Ovary (tissue), 10 donors: ENCODE measurements at regions of chr1 and their contacts with region 1.

Region 1: GRCh38 chr1:182084487-182085316 is 23.2 kb upstream of the ZNF648 start:
- DNase-seq: peak; percentile 83 to 93 (median 91)
- H3K4me3 ChIP-seq: no peak overlapping the region
- H3K27ac ChIP-seq: peak overlapping the region in 1 of 2 donors; percentile 64
- H3K4me1 ChIP-seq: peaks cover 2% of the 10 kb centered on the region
- H3K27me3 ChIP-seq: no peaks in the 10 kb centered on the region
- CTCF ChIP-seq: peak; percentile 78 to 95 (median 87)
- EP300 ChIP-seq: no peak
- POLR2A ChIP-seq: peak; percentile 4

Region 2: GRCh38 chr1:181482521-181483284 is 602.0 kb before region 1 on chr1:
- intact Hi-C with region 1: loop called in 1 of 4 experiments (anchors 10 kb)
- DNase-seq: no peak
- H3K4me3 ChIP-seq: no peak overlapping the region
- H3K27ac ChIP-seq: no peak overlapping the region
- H3K4me1 ChIP-seq: no peaks in the 10 kb centered on the region
- H3K27me3 ChIP-seq: no peaks in the 10 kb centered on the region
- CTCF ChIP-seq: no peak
- EP300 ChIP-seq: no peak
- POLR2A ChIP-seq: no peak

Region 3: GRCh38 chr1:182357913-182358312 is 273.2 kb after region 1 on chr1:
- intact Hi-C with region 1: no loop called
- DNase-seq: no peak
- H3K4me3 ChIP-seq: no peak overlapping the region
- H3K27ac ChIP-seq: no peak overlapping the region
- H3K4me1 ChIP-seq: no peaks in the 10 kb centered on the region
- H3K27me3 ChIP-seq: no peaks in the 10 kb centered on the region
- CTCF ChIP-seq: no peak
- EP300 ChIP-seq: no peak
- POLR2A ChIP-seq: no peak

Region 4: DNA sequence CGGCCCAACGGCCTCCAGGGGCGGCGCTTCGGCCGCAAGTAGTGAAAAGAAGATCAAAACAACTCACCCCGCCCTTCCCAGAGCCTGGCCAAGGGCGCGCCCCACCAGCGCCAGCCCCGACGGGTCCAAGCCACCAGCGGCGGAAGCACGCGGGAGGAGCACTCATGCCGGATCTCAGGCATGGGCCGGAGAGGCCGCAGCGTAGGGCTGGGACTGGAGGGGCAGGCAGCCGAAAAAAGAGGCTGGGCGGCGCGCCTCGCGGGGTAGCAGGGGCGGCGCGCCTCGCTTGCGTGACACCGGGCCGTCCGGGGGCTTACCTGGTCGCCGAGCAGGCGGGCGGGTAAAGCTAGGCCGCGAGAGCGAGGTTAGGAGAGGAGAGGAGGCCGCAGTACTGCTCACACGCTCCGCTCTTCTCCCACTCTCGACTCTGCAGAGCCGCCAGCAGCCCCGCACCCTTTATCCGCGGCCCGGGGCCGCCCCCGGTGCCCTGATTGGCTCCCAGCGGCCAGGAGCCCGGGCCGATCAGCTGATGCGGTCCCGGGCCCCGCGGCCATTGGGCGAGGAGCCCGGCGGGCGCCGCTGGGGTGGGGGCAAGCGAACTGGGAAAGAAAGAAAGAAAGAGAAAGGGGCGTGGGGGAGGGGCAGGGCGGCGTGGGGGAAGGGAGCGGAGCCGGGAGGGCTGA is 306.8 kb after region 1 on chr1 and contains the start of gene GLUL:
- intact Hi-C with region 1: loop called in 3 of 4 experiments (anchors 1 to 10 kb)
- DNase-seq: peak; percentile 97 to 98 (median 97)
- H3K4me3 ChIP-seq: peak within 1 kb of the TSS; percentile 88
- H3K27ac ChIP-seq: peak within 1 kb of the TSS; percentile 93 to 95
- H3K4me1 ChIP-seq: peaks cover 8% of the 10 kb centered on the region
- H3K27me3 ChIP-seq: no peaks in the 10 kb centered on the region
- CTCF ChIP-seq: peak; percentile 16 to 50 (median 26)
- EP300 ChIP-seq: no peak
- POLR2A ChIP-seq: peak; percentile 99
- total RNA-seq, gene GLUL: 605 to 1,338 (median 1,071) TPM

Region 5: DNA sequence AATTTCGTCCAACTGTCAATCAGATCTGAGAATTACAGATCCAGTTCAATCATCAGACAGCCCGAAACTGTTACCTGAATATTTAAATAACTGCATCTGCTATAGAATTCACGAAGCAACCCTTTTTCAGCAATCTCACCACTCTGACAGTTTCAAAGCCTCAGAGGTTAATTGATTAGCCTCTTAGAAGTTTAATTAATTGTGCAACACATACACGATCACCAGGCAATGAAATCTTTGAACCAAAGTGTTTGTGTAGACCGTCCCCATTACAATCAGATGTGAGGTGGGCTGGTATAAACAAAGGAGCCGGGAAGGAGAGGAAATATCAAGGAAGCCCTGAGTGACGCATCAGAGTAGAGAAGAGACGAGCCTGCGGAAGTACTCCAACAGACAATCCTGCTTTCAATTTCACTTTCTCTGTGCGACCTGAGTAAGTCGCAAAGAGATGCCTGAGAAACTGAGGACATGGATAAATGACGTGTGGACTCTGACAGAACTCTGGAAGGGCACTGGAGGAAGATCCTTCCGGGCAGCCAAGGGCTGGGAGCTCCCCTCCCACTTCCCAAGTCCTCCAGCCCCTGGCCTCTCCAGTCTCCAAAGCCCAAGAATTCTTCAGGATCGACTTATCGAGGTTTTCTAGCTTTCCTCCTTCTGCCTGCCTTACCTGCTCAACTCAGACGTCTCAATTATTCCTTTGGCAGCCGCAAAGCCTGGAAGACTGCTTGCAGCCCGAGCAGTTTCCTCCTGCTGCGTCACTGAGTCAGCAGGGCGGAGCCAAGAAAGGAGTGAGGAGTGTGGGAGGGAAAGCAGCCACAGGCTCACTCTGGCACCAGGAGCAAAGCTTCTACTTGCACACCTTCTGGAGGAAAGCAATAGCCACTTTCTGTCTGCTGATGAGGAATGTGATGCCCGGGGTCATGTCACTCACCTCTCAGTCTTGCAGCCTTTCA is 504.1 kb after region 1 on chr1 and contains the start of gene RNASEL:
- intact Hi-C with region 1: loop called in 2 of 4 experiments (anchors 5 to 10 kb)
- DNase-seq: peak; percentile 78 to 83 (median 81)
- H3K4me3 ChIP-seq: peak within 1 kb of the TSS; percentile 65
- H3K27ac ChIP-seq: peak within 1 kb of the TSS; percentile 69 to 95
- H3K4me1 ChIP-seq: peaks cover 4% of the 10 kb centered on the region
- H3K27me3 ChIP-seq: no peaks in the 10 kb centered on the region
- CTCF ChIP-seq: no peak
- EP300 ChIP-seq: no peak
- POLR2A ChIP-seq: peak; percentile 77
- total RNA-seq, gene RNASEL: 6.7 to 14.1 (median 9.7) TPM

Region 6: GRCh38 chr1:182789138-182790076 is 704.7 kb after region 1 on chr1 and contains the start of gene NPL:
- intact Hi-C with region 1: loop called in 3 of 4 experiments (anchors 5 to 10 kb)
- DNase-seq: peak; percentile 74 to 89 (median 81)
- H3K4me3 ChIP-seq: peak within 1 kb of the TSS; percentile 50
- H3K27ac ChIP-seq: peak within 1 kb of the TSS; percentile 31 to 32
- H3K4me1 ChIP-seq: no peaks in the 10 kb centered on the region
- H3K27me3 ChIP-seq: no peaks in the 10 kb centered on the region
- CTCF ChIP-seq: no peak
- EP300 ChIP-seq: no peak
- POLR2A ChIP-seq: peak; percentile 55
- total RNA-seq, gene NPL: 2.3 to 26.0 (median 3.7) TPM